Transverse colon (tissue), 4 donors: ENCODE measurements at regions of chr5 and their contacts with region 1.

Region 1: GRCh38 chr5:171743436-171744076 is 42.1 kb upstream of the SMIM23 start:
- DNase-seq: no peak
- H3K4me3 ChIP-seq: no peak overlapping the region
- H3K27ac ChIP-seq: no peak overlapping the region
- H3K4me1 ChIP-seq: no peaks in the 10 kb centered on the region
- H3K27me3 ChIP-seq: no peaks in the 10 kb centered on the region
- CTCF ChIP-seq: no peak
- EP300 ChIP-seq: no peak
- POLR2A ChIP-seq: no peak

Region 2: DNA sequence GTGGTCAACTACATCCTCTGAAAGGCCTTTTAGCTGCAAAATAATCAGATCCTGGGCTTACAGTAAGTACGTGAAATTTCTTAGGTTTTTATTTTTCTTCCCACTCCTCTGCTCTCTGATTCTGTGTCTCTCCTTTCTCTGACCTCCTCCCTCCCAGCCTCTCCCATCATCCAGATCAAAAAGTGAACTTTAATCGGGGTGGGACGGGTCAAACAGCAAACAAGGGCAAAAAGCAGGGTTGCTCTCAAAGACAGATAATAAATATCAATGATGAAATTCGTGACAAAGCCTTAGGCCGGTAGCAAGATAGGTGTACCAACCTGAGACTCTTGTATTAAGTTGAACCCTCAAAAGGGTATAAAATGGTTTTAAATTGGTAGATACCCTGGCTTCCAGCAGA is 805.6 kb before region 1 on chr5:
- in situ Hi-C with region 1: no loop called
- intact Hi-C with region 1: loop called (anchors 5 kb)
- DNase-seq: no peak
- H3K4me3 ChIP-seq: no peak overlapping the region
- H3K27ac ChIP-seq: no peak overlapping the region
- H3K4me1 ChIP-seq: no peaks in the 10 kb centered on the region
- H3K27me3 ChIP-seq: no peaks in the 10 kb centered on the region
- CTCF ChIP-seq: no peak
- EP300 ChIP-seq: no peak
- POLR2A ChIP-seq: no peak